ENCODE measurements at regions of chr5 and their contacts with region 1.

Region 1: DNA sequence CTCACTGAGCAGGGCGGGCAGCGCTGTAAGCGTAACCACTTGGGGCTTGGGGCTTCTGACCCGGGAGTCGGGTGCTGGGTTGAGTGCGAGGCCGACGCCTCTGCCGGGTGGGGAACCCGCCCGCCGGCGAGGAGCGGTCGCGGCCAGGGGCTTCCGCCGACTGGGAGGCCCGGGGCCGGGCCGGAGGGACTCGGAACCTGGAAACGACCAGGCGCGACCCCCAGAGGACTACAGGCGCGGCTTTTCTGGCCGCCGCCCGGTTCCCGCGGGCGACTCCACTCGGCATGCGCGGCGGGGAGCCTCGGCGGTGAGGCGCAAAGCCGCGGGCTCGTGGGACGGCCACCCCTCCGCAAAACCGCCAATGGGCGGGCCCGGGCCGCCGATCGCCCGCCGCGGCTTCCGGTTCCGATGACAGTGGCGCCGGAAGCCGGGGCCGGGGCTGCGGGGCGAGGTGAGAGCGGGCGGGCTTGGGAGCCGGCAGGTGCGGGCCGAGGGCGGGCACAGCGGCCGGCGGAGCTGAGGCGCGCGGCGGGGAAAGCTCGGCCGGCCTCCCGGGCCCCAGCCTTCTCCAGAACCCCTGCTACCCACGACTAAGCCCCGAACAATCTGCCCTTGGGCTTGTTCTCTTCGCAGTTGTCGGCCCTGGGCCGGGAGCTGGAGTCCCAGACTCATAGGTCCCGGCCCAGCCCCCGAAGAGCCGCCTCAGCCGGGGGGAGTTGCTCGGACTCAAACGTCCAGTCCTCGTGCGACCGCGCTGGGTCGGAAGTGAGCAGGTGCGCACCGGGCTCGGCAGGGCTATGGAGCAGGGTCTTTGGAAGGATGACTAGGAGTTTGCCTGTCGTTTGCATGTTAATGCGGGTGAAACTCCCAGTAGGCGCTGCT is at the start of gene RMND5B:
- DNase-seq: peak; percentile 91
- H3K4me3 ChIP-seq: peak within 1 kb of the TSS; percentile 78 to 97 (median 86)
- H3K27ac ChIP-seq: peak within 1 kb of the TSS; percentile 88 to 97 (median 91)
- H3K4me1 ChIP-seq: peaks cover 0 to 19% (median 14%) of the 10 kb centered on the region in 4 donors
- H3K27me3 ChIP-seq: no peaks in the 10 kb centered on the region
- CTCF ChIP-seq: no peak
- EP300 ChIP-seq: no peak
- POLR2A ChIP-seq: peak; percentile 24 to 68
- total RNA-seq, gene RMND5B: 37.5 to 44.8 (median 42.0) TPM

Region 2: GRCh38 chr5:178153573-178154343 is 22.9 kb after region 1 on chr5 and contains the start of gene NHP2:
- intact Hi-C with region 1: loop called (anchors 2 kb)
- DNase-seq: peak; percentile 99
- H3K4me3 ChIP-seq: peak within 1 kb of the TSS; percentile 56 to 88 (median 72)
- H3K27ac ChIP-seq: peak within 1 kb of the TSS; percentile 70 to 82 (median 80)
- H3K4me1 ChIP-seq: peaks cover 0 to 28% (median 18%) of the 10 kb centered on the region in 4 donors
- H3K27me3 ChIP-seq: no peaks in the 10 kb centered on the region
- CTCF ChIP-seq: no peak
- EP300 ChIP-seq: peak in 1 of 4 donors; percentile 81
- POLR2A ChIP-seq: peak in 1 of 2 donors; percentile 16
- total RNA-seq, gene NHP2: 77.8 to 231 (median 185) TPM

Region 3: DNA sequence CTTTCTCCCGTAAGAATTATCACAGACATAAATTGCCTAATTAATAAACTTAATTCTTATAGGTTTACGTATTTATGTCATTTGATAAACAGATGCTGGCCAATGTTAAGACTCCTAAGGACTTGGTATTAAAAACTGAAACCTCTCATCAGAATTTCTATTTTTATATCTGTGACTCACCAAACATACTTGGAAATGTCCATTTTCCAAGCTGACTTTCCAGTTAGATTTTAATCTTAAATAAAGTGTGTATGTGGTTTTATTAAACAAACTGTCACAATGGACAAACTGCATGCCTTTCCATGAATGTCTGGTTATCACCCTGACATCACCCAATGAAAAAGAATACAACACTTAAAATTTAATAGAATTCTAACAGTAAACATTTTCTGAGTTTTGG is 471.9 kb after region 1 on chr5:
- intact Hi-C with region 1: loop called (anchors 10 kb)
- DNase-seq: no peak
- H3K4me3 ChIP-seq: no peak overlapping the region
- H3K27ac ChIP-seq: peak overlapping the region; percentile 17 to 62 (median 56)
- H3K4me1 ChIP-seq: peaks cover 0 to 30% (median 19%) of the 10 kb centered on the region in 4 donors
- H3K27me3 ChIP-seq: no peaks in the 10 kb centered on the region
- CTCF ChIP-seq: no peak
- EP300 ChIP-seq: no peak
- POLR2A ChIP-seq: no peak